ENCODE measurements at regions of chr2 and their contacts with region 1.

Region 1: DNA sequence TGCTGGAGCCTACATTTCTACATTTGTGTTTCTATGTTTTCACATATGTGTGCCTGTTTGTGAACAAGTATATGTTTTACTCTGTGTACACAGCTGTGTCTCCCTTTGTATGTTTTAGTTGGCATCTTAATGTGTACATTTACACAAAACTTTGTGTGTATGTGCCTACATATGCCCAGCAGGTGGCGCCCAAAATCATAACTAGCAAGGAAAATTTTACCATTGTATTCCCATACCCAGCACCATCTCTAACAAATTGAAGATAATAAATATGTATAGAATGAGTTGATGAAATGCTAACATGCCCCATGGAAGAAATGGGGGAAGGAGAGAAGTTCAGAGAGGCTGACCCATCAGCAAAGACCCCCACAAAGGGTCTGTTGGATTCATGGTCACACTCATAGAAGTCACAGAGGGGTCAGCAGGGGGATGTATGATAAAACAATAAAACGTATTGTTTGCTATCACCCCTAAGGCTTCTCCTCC is 48.1 kb downstream of the PKDCC start:
- DNase-seq: peak; percentile 63 to 83
- H3K4me3 ChIP-seq: no peak overlapping the region
- H3K4me1 ChIP-seq: peaks cover 4% of the 10 kb centered on the region
- H3K27me3 ChIP-seq: peaks cover 2% of the 10 kb centered on the region; the same call in 1 of the 2 replicates

Region 2: DNA sequence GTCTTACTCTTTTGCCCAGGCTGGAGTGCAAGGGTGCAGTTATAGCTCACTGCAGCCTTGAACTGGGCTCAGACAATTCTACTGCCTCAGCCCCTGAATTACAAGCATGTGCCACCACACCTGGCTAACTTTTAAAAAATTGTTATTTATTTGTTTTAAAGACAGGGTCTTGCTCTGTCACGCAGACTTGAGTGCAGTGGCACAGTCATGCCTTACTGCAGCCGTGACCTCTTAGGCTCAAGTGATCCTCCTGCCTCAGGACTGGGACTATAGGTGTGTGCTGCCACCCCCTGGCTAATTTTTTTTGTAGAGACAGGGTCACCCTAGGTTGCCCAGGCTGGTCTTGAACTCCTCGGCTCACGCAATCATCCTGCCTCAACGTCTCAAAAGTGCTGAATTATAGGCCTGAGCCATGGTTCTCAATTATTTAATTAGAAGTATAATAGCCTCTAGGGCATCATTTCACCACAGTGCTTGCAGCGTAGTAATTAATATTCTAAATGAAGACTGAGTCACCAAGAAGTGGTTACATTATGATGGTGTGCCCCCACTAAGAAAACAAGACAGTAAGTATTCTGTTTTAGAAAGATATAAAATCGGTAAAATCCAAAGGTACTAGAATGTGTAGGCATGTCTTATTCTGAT is 142.8 kb after region 1 on chr2:
- in situ Hi-C with region 1: loop called (anchors 10 kb)
- DNase-seq: peak; percentile 33 to 63
- H3K4me3 ChIP-seq: no peak overlapping the region
- H3K4me1 ChIP-seq: peaks cover 25% of the 10 kb centered on the region
- H3K27me3 ChIP-seq: no peaks in the 10 kb centered on the region

Region 3: DNA sequence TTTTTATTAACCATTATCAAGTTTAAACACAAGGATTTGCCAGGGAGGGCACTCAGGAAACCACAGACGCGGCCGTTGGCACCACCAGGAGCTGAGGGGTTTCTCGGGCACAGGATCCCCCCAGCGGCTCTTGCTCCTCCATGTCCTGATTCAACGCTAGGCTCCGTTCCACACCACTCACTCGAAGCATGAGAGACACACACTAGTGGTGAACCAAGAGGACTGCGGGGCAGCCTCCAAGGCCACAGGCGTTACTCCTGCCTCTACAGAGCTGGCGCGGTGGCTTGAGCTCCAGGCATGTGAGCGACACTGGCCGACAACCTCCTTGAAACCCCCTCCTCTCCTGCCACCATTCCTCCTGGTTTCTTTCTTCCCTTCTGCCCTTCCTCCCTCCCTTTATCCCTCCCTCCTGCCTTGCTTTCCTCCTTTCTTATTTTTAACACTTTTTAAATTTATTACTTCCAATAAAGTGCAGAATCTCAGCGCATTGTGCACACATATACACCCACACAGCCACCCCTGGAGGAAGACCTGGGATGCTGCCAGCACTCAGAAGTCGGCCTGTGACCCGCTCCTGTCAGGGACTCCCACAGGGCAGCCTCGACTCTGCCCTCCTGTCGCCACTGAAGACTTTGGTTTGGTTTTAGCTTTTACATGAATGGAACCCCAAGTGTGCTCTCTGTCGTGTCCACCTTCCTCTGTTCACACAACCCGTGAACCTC is 243.4 kb after region 1 on chr2:
- in situ Hi-C with region 1: loop called (anchors 10 kb)
- DNase-seq: peak in 1 of 2 experiments; percentile 32
- H3K4me3 ChIP-seq: no peak overlapping the region
- H3K4me1 ChIP-seq: no peaks in the 10 kb centered on the region; the same call in 1 of the 2 replicates
- H3K27me3 ChIP-seq: no peaks in the 10 kb centered on the region

Region 4: DNA sequence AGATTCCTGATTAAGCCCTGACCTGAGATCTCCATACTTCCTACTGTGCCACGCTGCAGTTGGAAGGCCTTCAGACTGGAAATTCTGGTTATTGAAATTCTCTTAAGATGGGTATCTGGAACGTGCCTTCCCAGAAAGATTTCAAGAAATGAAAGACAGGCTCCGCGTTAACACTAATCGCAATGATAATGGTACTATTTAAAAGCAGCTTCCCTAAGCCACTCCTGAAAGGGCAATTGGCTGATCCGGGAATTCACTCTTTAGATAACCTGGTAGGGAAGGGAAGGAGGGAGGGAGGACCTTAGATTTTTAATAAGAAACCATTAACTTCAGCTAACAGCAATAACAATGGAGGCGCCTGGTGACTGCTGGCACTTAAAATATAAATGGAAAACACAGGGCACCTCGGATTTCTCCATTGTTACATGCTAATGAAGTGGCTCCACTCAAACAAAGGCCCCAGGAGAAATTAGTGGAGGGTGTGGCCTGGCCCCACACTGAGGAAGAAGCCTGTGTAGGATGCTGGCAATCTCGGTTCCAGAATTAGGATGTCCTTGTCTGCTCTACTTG is 449.9 kb after region 1 on chr2:
- in situ Hi-C with region 1: no loop called
- DNase-seq: peak; percentile 89 to 100
- H3K4me3 ChIP-seq: no peak overlapping the region
- H3K4me1 ChIP-seq: peaks cover 59% of the 10 kb centered on the region
- H3K27me3 ChIP-seq: no peaks in the 10 kb centered on the region

Measured in HAP-1 (cell line).